ENCODE measurements at regions of chr14 and their contacts with region 1.

Region 1: GRCh38 chr14:25132732-25133422 is 82.9 kb upstream of the STXBP6 start:
- DNase-seq: peak in 7 of 9 donors; percentile 2 to 30 (median 19)
- ATAC-seq: peak; percentile 90
- H3K4me3 ChIP-seq: no peak overlapping the region
- H3K4me3 Mint-ChIP-seq: peak overlapping the region in 1 of 10 donors; percentile 56
- H3K27ac ChIP-seq: no peak overlapping the region
- H3K27ac Mint-ChIP-seq: no peak overlapping the region
- H3K4me1 ChIP-seq: peaks cover 0 to 3% of the 10 kb centered on the region in 2 donors
- H3K4me1 Mint-ChIP-seq: peaks cover 0 to 8% (median 5%) of the 10 kb centered on the region in 7 donors
- H3K27me3 ChIP-seq: no peaks in the 10 kb centered on the region
- H3K27me3 Mint-ChIP-seq: peaks cover 17 to 57% (median 51%) of the 10 kb centered on the region in 5 donors

Region 2: DNA sequence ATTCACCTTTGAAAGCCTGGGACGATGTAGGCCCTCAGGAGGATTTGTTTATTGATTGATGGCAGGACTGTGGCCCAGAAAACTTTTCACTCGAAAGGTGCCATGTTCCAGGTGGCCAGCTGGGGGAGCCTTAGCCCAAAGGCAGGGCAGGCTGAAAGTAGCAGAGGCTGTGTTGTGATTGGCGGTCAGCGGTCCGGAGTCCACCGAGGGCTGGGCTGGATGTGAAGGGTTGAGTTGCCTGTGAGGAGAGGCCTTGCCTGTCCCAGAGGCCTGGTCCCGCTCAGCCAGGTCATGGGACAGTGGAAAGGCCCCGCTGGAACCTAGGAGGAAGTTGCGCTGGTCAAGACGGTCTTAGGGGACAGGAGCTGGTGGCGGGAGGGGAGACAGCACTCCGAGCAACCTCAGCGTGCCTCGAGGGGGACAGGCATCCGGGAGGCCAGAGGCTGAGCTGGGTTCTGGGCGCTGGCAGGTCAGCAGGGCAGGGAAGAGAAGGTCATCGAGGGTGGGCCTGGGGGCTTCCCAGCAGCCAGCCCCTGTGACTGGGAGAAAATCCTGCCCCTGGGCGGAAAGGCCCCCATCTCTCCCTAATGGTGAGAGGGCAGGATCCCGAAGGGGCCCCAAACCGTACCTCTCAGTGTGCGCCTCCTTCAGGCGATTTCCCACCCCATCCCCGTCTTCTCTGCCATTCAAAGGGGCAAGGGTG is 651.1 kb before region 1 on chr14:
- CTCF ChIA-PET with region 1: no interaction called
- POLR2A ChIA-PET with region 1: no interaction called
- intact Hi-C with region 1: loop called (anchors 2 to 5 kb)
- DNase-seq: peak in 6 of 9 donors; percentile 24 to 51 (median 35)
- ATAC-seq: peak; percentile 71
- H3K4me3 ChIP-seq: peak overlapping the region; percentile 26
- H3K4me3 Mint-ChIP-seq: peak overlapping the region in 8 of 10 donors; percentile 39 to 81 (median 60)
- H3K27ac ChIP-seq: no peak overlapping the region
- H3K27ac Mint-ChIP-seq: peak overlapping the region in 7 of 9 donors; percentile 13 to 85 (median 70)
- H3K4me1 ChIP-seq: peaks cover 12 to 19% of the 10 kb centered on the region in 2 donors
- H3K4me1 Mint-ChIP-seq: peaks cover 0 to 28% (median 15%) of the 10 kb centered on the region in 7 donors
- H3K27me3 ChIP-seq: no peaks in the 10 kb centered on the region
- H3K27me3 Mint-ChIP-seq: peaks cover 0 to 3% (median 0%) of the 10 kb centered on the region in 5 donors

Region 3: DNA sequence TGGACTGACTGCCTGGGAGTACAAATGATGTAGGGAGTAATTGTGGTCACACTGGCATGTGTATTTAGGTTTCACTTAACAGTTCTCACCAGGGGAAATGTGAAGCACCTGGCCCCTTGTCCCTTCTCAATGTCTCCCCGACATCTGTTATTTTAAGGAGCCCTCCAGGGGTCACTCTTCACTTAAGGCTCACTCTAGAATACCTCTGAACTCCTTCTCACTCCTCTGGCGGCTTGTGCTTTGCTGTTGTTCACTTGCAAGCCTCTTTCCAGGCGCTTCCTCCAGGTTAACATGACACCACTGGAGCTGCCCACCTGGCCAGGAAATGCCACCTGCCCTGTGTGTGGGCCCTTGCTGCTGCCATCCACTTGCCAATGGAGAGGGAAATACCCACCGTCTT is 442.4 kb before region 1 on chr14:
- CTCF ChIA-PET with region 1: no interaction called
- POLR2A ChIA-PET with region 1: no interaction called
- intact Hi-C with region 1: loop called in 1 of 2 experiments (anchors 5 kb)
- DNase-seq: no peak
- ATAC-seq: no peak
- H3K4me3 ChIP-seq: no peak overlapping the region
- H3K4me3 Mint-ChIP-seq: no peak overlapping the region
- H3K27ac ChIP-seq: no peak overlapping the region
- H3K27ac Mint-ChIP-seq: no peak overlapping the region
- H3K4me1 ChIP-seq: peaks cover 0 to 45% of the 10 kb centered on the region in 2 donors
- H3K4me1 Mint-ChIP-seq: peaks cover 11 to 44% (median 12%) of the 10 kb centered on the region in 7 donors
- H3K27me3 ChIP-seq: no peaks in the 10 kb centered on the region
- H3K27me3 Mint-ChIP-seq: peaks cover 2 to 10% (median 4%) of the 10 kb centered on the region in 5 donors

Region 4: GRCh38 chr14:24734878-24735500 is 397.9 kb before region 1 on chr14:
- CTCF ChIA-PET with region 1: no interaction called
- POLR2A ChIA-PET with region 1: no interaction called
- intact Hi-C with region 1: loop called in 1 of 2 experiments (anchors 2 kb)
- DNase-seq: peak in 1 of 9 donors; percentile 19
- ATAC-seq: peak; percentile 37
- H3K4me3 ChIP-seq: no peak overlapping the region
- H3K4me3 Mint-ChIP-seq: no peak overlapping the region
- H3K27ac ChIP-seq: no peak overlapping the region
- H3K27ac Mint-ChIP-seq: no peak overlapping the region
- H3K4me1 ChIP-seq: no peaks in the 10 kb centered on the region
- H3K4me1 Mint-ChIP-seq: peaks cover 0 to 2% (median 0%) of the 10 kb centered on the region in 7 donors
- H3K27me3 ChIP-seq: no peaks in the 10 kb centered on the region
- H3K27me3 Mint-ChIP-seq: peaks cover 0 to 17% (median 4%) of the 10 kb centered on the region in 5 donors

Region 5: GRCh38 chr14:25069879-25070278 is 63.0 kb before region 1 on chr14:
- CTCF ChIA-PET with region 1: no interaction called
- POLR2A ChIA-PET with region 1: no interaction called
- intact Hi-C with region 1: no loop called
- DNase-seq: no peak
- ATAC-seq: no peak
- H3K4me3 ChIP-seq: no peak overlapping the region
- H3K4me3 Mint-ChIP-seq: no peak overlapping the region
- H3K27ac ChIP-seq: no peak overlapping the region
- H3K27ac Mint-ChIP-seq: no peak overlapping the region
- H3K4me1 ChIP-seq: no peaks in the 10 kb centered on the region
- H3K4me1 Mint-ChIP-seq: no peaks in the 10 kb centered on the region
- H3K27me3 ChIP-seq: peaks cover 0 to 3% of the 10 kb centered on the region in 2 donors
- H3K27me3 Mint-ChIP-seq: peaks cover 0 to 26% (median 12%) of the 10 kb centered on the region in 5 donors